Thyroid gland (tissue), 4 donors: ENCODE measurements at regions of chr17 and their contacts with region 1.

Region 1: DNA sequence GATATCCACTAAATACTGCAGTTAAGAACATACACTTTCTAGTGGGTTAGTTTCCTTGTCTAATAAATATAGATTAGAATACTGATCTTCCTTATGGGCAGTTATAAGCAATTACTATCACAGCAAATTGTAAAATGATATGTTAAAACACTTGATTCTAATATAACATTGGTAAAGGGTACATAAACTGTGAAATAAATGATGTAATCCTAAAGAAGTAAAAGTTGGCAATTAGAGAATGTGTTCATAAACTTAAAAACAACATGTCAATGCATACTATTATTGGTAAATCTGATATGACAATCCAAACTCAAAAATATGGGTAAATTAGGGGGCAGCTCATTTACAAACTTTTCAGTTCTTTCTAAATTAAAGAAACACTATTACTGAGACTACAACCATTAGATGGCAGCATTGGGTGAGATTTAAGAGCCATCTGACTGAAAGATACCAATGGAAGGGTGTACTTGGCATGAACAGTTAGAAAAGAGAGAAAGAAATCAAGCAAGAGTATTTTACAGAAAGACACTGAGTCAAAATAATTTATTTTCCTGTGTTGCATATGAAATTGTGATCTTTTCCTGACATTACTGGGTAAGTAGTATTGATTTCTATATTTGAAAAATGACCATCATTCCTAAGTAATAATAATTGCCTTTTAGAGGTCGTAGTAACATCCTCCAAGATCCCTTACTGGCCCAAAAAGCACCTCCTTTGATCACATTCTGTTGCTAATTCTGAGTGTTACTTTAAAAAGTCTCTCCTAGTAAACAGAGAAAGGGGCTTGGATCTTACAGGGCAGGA is 119.6 kb downstream of the SPAG9 start:
- DNase-seq: no peak
- H3K4me3 ChIP-seq: no peak overlapping the region
- H3K27ac ChIP-seq: peak overlapping the region in 1 of 3 donors; percentile 24
- H3K4me1 ChIP-seq: peaks cover 6 to 13% of the 10 kb centered on the region in 2 donors
- H3K27me3 ChIP-seq: no peaks in the 10 kb centered on the region
- CTCF ChIP-seq: peak in 5 of 6 experiments; percentile 13 to 84 (median 50)
- POLR2A ChIP-seq: no peak

Region 2: GRCh38 chr17:51056813-51057510 is 55.9 kb after region 1 on chr17:
- intact Hi-C with region 1: no loop called
- DNase-seq: peak; percentile 25 to 42
- H3K4me3 ChIP-seq: no peak overlapping the region
- H3K27ac ChIP-seq: peak overlapping the region; percentile 49 to 70 (median 64)
- H3K4me1 ChIP-seq: peaks cover 9 to 26% of the 10 kb centered on the region in 2 donors
- H3K27me3 ChIP-seq: no peaks in the 10 kb centered on the region
- CTCF ChIP-seq: peak in 5 of 6 experiments; percentile 30 to 72 (median 63)
- POLR2A ChIP-seq: no peak

Region 3: DNA sequence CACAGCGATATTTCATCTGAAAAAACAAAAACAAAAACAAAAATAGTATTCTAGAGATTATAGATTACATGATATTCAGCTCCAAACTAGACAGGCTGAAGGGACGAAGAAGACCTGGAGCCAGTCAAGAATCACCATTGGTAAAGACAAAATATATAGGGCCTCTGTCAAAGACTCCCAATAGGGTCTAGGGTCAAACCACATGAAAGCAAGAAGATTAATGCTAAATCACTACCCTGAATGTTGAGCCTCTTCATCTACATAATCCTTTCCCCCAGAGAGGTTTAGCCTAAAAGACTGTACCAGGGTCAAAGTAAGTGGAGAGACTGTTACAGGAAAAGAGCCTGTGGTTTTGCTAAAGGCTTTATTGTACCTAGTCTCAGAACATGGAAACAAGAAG is 141.6 kb after region 1 on chr17:
- intact Hi-C with region 1: no loop called
- DNase-seq: no peak
- H3K4me3 ChIP-seq: no peak overlapping the region
- H3K27ac ChIP-seq: no peak overlapping the region
- H3K4me1 ChIP-seq: no peaks in the 10 kb centered on the region
- H3K27me3 ChIP-seq: no peaks in the 10 kb centered on the region
- CTCF ChIP-seq: no peak
- POLR2A ChIP-seq: no peak

Region 4: GRCh38 chr17:51153210-51154072 is 152.4 kb after region 1 on chr17 and contains the start of gene NME1:
- intact Hi-C with region 1: loop called (anchors 5 kb)
- DNase-seq: peak; percentile 96 to 98
- H3K4me3 ChIP-seq: peak within 1 kb of the TSS; percentile 36 to 64 (median 40)
- H3K27ac ChIP-seq: peak within 1 kb of the TSS; percentile 88 to 95 (median 89)
- H3K4me1 ChIP-seq: peaks cover 14 to 16% of the 10 kb centered on the region in 2 donors
- H3K27me3 ChIP-seq: no peaks in the 10 kb centered on the region
- CTCF ChIP-seq: peak; percentile 39 to 94 (median 78)
- POLR2A ChIP-seq: peak in 1 of 2 donors; percentile 48
- total RNA-seq, gene NME1: 28.5 to 50.9 (median 38.5) TPM